CD8-positive, alpha-beta memory T cell (primary cell): ENCODE measurements at regions of chr2 and their contacts with region 1.

Region 1: DNA sequence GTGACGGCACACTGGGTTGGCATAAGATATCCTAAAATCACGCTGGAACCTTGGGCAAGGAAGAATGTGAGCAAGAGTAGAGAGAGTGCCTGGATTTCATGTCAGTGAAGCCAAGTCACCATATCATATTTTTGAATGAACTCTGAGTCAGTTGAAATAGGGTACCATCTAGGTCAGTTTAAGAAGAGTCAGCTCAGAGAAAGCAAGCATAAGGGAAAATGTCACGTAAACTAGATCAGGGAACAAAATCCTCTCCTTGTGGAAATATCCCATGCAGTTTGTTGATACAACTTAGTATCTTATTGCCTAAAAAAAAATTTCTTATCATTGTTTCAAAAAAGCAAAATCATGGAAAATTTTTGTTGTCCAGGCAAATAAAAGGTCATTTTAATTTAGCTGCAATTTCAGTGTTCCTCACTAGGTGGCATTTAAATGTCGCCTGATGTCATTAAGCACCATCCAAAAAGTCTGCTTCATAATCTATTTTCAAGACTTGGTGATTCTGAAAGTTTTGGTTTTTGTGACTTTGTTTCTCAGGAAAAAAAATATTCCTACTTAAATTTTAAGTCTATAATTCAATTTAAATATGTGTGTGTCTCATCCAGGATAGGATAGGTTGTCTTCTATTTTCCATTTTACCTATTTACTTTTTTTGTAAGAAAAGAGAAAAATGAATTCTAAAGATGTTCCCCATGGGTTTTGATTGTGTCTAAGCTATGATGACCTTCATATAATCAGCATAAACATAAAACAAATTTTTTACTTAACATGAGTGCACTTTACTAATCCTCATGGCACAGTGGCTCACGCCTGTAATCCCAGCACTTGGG is 19.6 kb downstream of the RSAD2 start:
- DNase-seq: peak in 2 of 5 donors; percentile 32 to 38
- H3K4me3 ChIP-seq: no peak overlapping the region
- H3K4me3 Mint-ChIP-seq: no peak overlapping the region
- H3K27ac ChIP-seq: no peak overlapping the region
- H3K27ac Mint-ChIP-seq: no peak overlapping the region
- H3K4me1 ChIP-seq: peaks cover 7% of the 10 kb centered on the region
- H3K4me1 Mint-ChIP-seq: peaks cover 0 to 4% (median 2%) of the 10 kb centered on the region in 3 donors
- H3K27me3 ChIP-seq: no peaks in the 10 kb centered on the region
- H3K27me3 Mint-ChIP-seq: no peaks in the 10 kb centered on the region

Region 2: DNA sequence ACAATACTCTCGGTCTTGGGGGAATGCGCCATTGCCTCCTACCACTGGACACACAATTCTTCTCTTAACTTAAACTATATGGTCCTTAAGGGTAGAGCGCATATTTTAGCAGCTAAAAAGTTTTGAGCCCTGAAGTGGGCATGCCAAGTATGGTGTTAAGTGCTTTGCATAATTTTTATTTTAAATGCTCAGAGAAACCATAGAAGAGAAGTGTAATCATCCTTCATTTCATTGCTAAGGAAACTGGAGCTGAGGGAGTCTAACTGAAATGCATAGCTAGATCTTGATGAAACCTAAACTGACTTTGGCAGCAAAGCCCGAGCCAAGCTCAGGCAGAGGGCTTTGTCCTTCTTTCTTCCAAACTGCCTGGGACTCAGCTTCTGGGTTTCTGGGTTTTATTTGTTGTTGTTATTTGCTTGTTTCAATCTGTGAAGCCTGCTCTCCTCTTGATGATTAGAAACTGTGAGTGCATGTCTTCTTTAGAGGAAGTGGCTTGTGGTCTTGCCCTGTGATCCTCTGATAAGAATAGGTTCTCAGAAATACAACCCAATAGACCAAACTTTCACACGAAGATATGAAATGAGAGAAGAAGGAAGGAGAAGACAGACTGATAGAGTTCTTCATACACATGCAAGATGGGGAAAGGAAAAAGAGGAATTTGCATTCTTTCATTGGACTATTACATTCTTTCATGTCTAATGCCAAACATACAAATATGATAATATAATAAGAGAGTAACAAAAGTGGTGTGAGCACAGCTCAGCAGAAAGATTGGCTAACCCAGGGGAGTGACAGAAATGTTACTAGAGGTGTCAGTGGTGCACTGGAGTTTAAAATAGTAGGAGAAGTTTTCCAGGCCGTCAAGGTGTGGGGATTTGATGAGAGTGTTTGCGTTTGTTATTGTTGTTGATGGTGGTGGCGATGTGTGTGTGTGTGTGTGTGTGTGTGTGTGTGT is 12.6 kb after region 1 on chr2:
- CTCF ChIA-PET with region 1: interaction called, 34 read pairs
- POLR2A ChIA-PET with region 1: interaction called, 11 read pairs
- DNase-seq: peak in 4 of 5 donors; percentile 15 to 74 (median 66)
- H3K4me3 ChIP-seq: peak overlapping the region; percentile 42
- H3K4me3 Mint-ChIP-seq: peak overlapping the region; percentile 57 to 83 (median 69)
- H3K27ac ChIP-seq: no peak overlapping the region
- H3K27ac Mint-ChIP-seq: peak overlapping the region; percentile 59 to 95 (median 89)
- H3K4me1 ChIP-seq: peaks cover 89% of the 10 kb centered on the region
- H3K4me1 Mint-ChIP-seq: peaks cover 77 to 92% (median 90%) of the 10 kb centered on the region in 3 donors
- H3K27me3 ChIP-seq: no peaks in the 10 kb centered on the region
- H3K27me3 Mint-ChIP-seq: peaks cover 0 to under 1% of the 10 kb centered on the region in 2 donors

Region 3: GRCh38 chr2:6917071-6917760 is 20.1 kb after region 1 on chr2 and contains the start of gene RNF144A:
- CTCF ChIA-PET with region 1: interaction called, 34 read pairs
- POLR2A ChIA-PET with region 1: no interaction called
- DNase-seq: peak; percentile 62 to 78 (median 73)
- H3K4me3 ChIP-seq: peak within 1 kb of the TSS; percentile 52
- H3K4me3 Mint-ChIP-seq: peak within 1 kb of the TSS; percentile 74 to 94 (median 80)
- H3K27ac ChIP-seq: peak within 1 kb of the TSS; percentile 40
- H3K27ac Mint-ChIP-seq: peak within 1 kb of the TSS in 6 of 8 donors; percentile 12 to 96 (median 76)
- H3K4me1 ChIP-seq: peaks cover 72% of the 10 kb centered on the region
- H3K4me1 Mint-ChIP-seq: peaks cover 50 to 75% (median 70%) of the 10 kb centered on the region in 3 donors
- H3K27me3 ChIP-seq: no peaks in the 10 kb centered on the region
- H3K27me3 Mint-ChIP-seq: peaks cover 0 to 4% of the 10 kb centered on the region in 2 donors
- total RNA-seq, gene RNF144A: 13.5 to 14.9 TPM

Region 4: DNA sequence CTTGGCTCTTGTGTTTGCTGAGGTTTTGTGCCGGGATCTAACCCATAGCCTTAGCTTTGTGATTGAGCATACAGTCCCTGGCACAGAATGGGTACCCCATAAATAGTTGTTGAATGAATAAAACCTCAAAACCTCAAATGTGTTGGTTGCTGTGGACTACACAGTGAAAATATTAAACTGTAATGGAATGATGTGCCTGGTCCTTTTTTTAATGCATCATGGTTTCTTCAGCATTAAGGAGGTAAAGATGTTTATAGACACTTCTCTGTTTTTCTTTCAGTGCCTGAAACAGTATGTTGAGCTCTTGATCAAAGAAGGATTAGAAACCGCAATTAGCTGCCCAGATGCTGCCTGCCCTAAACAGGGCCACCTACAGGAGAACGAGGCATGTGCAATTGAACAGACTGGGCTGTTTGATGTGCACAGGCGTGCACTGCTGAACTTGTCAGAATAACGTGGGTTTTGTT is 117.1 kb after region 1 on chr2:
- CTCF ChIA-PET with region 1: interaction called, 26 read pairs
- POLR2A ChIA-PET with region 1: no interaction called
- DNase-seq: peak in 2 of 5 donors; percentile 18
- H3K4me3 ChIP-seq: no peak overlapping the region
- H3K4me3 Mint-ChIP-seq: no peak overlapping the region
- H3K27ac ChIP-seq: no peak overlapping the region
- H3K27ac Mint-ChIP-seq: peak overlapping the region in 4 of 8 donors; percentile 3 to 58 (median 34)
- H3K4me1 ChIP-seq: peaks cover 8% of the 10 kb centered on the region
- H3K4me1 Mint-ChIP-seq: peaks cover 18 to 32% (median 28%) of the 10 kb centered on the region in 3 donors
- H3K27me3 ChIP-seq: no peaks in the 10 kb centered on the region
- H3K27me3 Mint-ChIP-seq: no peaks in the 10 kb centered on the region

Region 5: DNA sequence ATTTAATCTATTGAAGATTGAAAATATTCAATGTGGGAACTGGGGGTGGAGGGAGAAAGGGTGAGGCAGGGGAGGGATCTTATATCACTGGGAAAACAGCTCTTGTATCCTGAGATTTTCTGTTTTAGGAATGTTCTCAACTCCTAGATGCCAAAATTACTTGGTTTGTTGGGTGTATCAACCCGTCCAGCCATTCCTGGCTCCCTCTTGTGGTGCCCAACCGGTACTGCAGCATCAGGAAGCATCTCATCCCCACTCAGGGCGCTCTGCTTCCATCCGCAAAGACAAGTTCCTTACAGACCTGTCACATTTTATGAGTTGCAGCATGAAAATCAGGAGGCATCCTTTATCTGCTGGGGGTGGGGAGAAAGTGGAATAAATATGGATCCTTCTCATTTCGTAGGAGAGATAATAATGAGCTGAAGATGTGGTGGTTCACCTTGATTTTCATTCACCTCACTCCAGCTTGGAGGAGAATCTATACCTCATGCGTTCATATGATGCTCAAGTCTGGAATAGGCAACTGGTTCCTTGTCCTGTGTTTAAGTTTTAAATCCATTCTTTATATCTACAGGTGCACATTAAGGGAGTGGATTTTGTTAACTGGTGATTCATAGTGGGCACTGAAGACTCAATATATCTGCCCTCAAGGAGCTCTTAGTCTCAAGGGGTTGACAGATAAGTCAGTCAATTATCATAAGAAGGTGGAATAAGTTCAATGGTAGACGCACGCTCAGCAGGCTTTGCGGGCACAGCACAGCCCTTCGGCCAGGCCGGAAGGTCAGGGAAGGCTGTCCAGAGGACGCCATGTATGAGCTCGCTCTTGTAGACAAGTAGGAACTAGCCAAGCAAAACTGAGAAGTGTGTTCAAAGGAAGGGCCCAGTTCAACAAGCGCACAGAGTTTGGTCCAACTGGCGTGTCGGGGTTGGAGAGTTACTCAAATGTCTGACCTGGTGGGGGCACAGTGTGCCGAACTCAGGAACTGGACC is 147.4 kb after region 1 on chr2:
- CTCF ChIA-PET with region 1: interaction called, 31 read pairs
- POLR2A ChIA-PET with region 1: no interaction called
- DNase-seq: peak; percentile 41 to 81 (median 51)
- H3K4me3 ChIP-seq: no peak overlapping the region
- H3K4me3 Mint-ChIP-seq: no peak overlapping the region
- H3K27ac ChIP-seq: no peak overlapping the region
- H3K27ac Mint-ChIP-seq: peak overlapping the region in 1 of 8 donors; percentile 3
- H3K4me1 ChIP-seq: no peaks in the 10 kb centered on the region
- H3K4me1 Mint-ChIP-seq: peaks cover 7 to 13% (median 10%) of the 10 kb centered on the region in 3 donors
- H3K27me3 ChIP-seq: no peaks in the 10 kb centered on the region
- H3K27me3 Mint-ChIP-seq: no peaks in the 10 kb centered on the region

Region 6: GRCh38 chr2:7111626-7112025 is 214.5 kb after region 1 on chr2:
- CTCF ChIA-PET with region 1: no interaction called
- POLR2A ChIA-PET with region 1: no interaction called
- DNase-seq: no peak
- H3K4me3 ChIP-seq: no peak overlapping the region
- H3K4me3 Mint-ChIP-seq: no peak overlapping the region
- H3K27ac ChIP-seq: no peak overlapping the region
- H3K27ac Mint-ChIP-seq: no peak overlapping the region
- H3K4me1 ChIP-seq: no peaks in the 10 kb centered on the region
- H3K4me1 Mint-ChIP-seq: no peaks in the 10 kb centered on the region
- H3K27me3 ChIP-seq: no peaks in the 10 kb centered on the region
- H3K27me3 Mint-ChIP-seq: peaks cover 0 to 3% of the 10 kb centered on the region in 2 donors